ENCODE measurements at regions of chr2 and their contacts with region 1.

Region 1: DNA sequence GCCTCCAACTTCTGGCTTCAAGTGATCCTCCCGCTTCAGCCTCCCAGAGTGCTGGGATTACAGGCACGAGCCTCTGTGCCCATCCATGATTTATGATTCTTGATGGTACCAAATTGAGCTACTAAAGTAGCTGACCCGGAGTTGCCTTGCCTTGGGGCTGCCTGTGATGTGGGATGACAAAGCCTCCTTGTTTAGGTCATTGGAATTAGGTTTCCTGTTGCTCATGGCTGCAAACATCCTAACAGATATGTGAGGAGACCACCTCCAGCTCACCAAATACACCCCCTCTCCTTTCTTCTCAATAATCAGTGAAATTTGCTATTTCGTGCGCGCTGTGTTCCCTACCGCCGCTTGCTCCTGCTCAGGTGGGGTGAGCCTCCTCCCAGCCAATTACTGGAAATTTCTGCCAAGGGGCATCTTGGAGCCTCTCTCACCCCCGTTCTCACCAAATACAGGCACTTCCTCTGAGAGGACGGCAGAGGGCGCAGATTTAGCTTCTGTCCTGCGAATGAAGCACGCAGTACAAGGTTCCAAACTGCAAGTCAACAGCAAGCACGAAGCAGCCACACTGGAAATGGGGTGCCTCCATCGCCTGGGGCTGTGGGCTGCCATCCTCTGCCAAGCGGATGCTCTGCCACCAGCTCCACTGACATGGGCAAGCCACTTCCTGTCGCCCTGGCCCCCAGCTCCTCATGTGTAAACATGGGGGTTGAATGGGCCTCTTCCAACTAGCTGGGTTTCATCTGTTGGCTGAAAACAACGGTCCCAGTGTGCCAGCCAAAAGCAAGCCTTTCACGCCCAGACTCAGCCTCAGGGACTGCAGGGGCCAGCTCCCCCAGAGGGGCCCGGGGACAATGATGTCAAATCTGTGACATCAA is 71.7 kb downstream of the NCAPH start:
- DNase-seq: peak; percentile 58 to 84 (median 72)
- H3K4me3 ChIP-seq: peak overlapping the region in 35 of 59 donors; percentile 0 to 50 (median 21)
- H3K27ac ChIP-seq: peak overlapping the region; percentile 68 to 96 (median 91)
- H3K27me3 ChIP-seq: no peaks in the 10 kb centered on the region
- CTCF ChIP-seq: peak; percentile 66 to 89 (median 79)

Region 2: DNA sequence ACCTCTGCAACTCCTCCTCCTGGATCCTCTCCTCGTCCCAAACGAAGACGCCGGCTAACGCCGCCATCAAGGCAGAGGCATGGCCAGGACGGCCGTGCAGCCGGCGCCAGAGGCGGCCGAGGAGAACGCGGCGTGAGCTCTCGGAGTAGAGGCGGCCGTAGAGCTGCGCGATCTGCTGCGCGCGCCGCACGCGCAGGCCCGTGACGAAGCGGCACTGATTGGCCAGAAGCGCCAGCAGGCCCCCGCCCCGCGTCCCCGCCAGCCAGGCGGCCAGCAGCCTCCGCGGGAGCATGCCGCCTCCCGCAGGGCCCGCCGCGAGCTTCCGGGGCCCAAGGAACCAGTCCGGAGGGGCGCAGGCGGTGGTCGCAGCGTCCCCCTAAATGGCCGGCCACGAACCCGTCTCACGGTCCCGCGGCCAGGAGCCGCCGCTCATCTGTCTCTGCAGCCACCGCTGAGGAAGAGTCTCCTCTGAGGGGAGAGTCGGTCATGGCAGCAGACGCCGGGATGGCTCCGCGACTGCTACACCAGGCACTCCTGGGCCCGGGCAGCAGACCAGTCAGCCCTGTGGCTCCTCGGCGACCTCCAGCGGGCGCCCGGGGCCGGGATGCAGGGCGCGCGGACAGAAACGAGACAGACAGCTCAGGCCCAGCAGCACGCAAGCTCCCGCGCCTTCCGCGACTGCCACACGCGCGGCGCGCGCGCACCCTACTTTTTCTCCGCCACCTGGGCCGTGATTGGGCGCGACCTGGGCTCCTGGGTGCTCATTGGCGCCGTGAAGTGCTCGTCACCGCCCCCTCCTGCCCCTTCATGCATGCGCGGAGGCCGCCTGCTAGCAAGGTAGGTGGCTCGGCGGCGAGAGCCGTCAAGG is 198.9 kb before region 1 on chr2 and contains the start of gene STARD7:
- intact Hi-C with region 1: loop called in 1 of 2 experiments (anchors 5 kb)
- DNase-seq: peak; percentile 96 to 99 (median 98)
- H3K4me3 ChIP-seq: peak within 1 kb of the TSS; percentile 58 to 99 (median 94)
- H3K27ac ChIP-seq: peak within 1 kb of the TSS; percentile 70 to 99 (median 95)
- H3K27me3 ChIP-seq: no peaks in the 10 kb centered on the region
- CTCF ChIP-seq: peak in 35 of 56 donors; percentile 4 to 63 (median 37)
- total RNA-seq, gene STARD7: 105 to 205 (median 135) TPM

Region 3: GRCh38 chr2:96305091-96305978 is 101.9 kb before region 1 on chr2 and contains the start of gene SNRNP200:
- intact Hi-C with region 1: loop called in 1 of 2 experiments (anchors 5 kb)
- DNase-seq: peak; percentile 83 to 94 (median 90)
- H3K4me3 ChIP-seq: peak within 1 kb of the TSS; percentile 63 to 100 (median 86)
- H3K27ac ChIP-seq: peak within 1 kb of the TSS in 54 of 59 donors; percentile 14 to 94 (median 74)
- H3K27me3 ChIP-seq: no peaks in the 10 kb centered on the region
- CTCF ChIP-seq: peak in 30 of 56 donors; percentile 6 to 51 (median 25)
- total RNA-seq, gene SNRNP200: 76.1 to 117 (median 91.0) TPM

Region 4: DNA sequence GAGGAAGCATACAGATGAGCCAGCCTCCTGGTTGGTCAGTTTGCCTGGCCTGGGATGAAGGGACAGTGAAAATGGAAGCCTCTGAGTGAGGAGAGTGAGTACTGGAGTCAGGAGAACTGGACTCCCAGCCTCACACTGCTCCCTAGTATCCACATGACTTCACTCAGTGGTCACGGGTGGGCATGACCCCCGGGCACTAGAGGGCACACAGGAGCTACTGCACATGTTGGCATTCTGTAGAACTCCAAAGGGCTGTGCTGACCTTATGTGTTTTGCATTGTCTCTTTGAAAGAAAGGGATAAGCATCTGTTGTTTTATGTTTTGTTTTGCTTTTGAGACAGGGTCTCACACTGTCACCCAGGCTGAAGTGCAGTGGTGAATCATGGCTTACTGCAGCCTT is 48.0 kb before region 1 on chr2:
- intact Hi-C with region 1: loop called in 1 of 2 experiments (anchors 5 kb)
- DNase-seq: peak in 9 of 10 donors; percentile 63 to 87 (median 74)
- H3K4me3 ChIP-seq: no peak overlapping the region
- H3K27ac ChIP-seq: peak overlapping the region in 13 of 59 donors; percentile 10 to 58 (median 33)
- H3K27me3 ChIP-seq: no peaks in the 10 kb centered on the region
- CTCF ChIP-seq: peak in 54 of 56 donors; percentile 24 to 82 (median 64)

Region 5: GRCh38 chr2:96509114-96509846 is 102.0 kb after region 1 on chr2:
- intact Hi-C with region 1: loop called (anchors 1 to 2 kb)
- DNase-seq: peak; percentile 80 to 94 (median 87)
- H3K4me3 ChIP-seq: peak overlapping the region in 15 of 59 donors; percentile 1 to 74 (median 26)
- H3K27ac ChIP-seq: peak overlapping the region in 13 of 59 donors; percentile 3 to 68 (median 28)
- H3K27me3 ChIP-seq: no peaks in the 10 kb centered on the region
- CTCF ChIP-seq: peak; percentile 91 to 100 (median 99)

Region 6: GRCh38 chr2:96523659-96524481 is 116.6 kb after region 1 on chr2:
- intact Hi-C with region 1: no loop called
- DNase-seq: peak in 1 of 10 donors; percentile 7
- H3K4me3 ChIP-seq: no peak overlapping the region
- H3K27ac ChIP-seq: no peak overlapping the region
- H3K27me3 ChIP-seq: no peaks in the 10 kb centered on the region
- CTCF ChIP-seq: no peak

Region 7: DNA sequence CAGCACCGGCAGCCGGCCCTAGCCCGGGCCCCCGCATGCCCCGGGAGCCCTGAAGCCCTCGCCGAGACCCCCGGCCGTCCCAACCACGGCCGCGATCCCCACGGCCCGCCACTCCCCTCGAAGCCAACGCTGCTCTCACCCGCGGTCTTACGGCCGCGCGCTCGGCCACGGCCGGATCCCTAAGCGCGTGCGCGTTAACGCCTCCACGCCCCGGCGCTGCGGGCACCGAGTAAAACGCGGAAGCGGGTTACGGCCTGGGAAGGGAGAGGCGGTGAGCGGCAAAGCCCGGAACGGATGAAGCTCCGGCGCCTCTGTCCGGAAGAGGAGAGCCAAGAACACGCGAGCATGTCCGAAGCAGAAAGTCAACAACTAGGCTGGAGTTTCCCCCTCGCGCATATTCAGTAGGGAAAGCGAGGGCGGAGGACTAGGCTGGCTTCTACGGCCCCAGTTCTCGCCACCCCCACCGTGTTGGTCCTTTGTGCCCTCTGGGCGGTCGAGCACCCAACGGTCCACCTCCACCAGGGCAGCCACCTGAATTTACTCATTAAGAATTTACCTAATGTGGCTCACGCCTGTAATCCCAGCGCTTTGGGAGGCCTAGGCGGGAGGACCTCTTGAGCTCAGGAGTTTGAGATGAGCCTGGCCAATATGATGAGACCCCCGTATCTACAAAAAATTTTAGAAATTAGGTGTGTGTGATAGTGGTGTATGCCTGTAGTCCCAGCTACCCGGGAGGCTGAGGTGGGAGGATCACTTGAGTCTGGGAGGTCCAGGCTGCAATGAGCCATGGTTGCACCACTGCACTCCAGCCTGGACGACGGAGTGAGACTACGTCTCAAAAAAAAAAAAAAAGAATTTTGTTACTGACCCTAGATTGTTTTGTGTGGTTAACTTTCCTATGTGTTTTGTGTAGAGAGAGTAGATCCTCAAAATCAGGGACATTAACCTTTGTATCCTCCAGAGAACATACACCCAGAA is 231.2 kb after region 1 on chr2 and contains the start of gene KANSL3:
- intact Hi-C with region 1: loop called in 1 of 2 experiments (anchors 5 kb)
- DNase-seq: peak; percentile 73 to 92 (median 82)
- H3K4me3 ChIP-seq: peak within 1 kb of the TSS; percentile 57 to 95 (median 83)
- H3K27ac ChIP-seq: peak within 1 kb of the TSS in 56 of 59 donors; percentile 18 to 95 (median 84)
- H3K27me3 ChIP-seq: no peaks in the 10 kb centered on the region
- CTCF ChIP-seq: peak in 31 of 56 donors; percentile 6 to 58 (median 26)
- total RNA-seq, gene KANSL3: 39.7 to 81.1 (median 55.0) TPM